ENCODE measurements at regions of chr9 and their contacts with region 1.

Region 1: DNA sequence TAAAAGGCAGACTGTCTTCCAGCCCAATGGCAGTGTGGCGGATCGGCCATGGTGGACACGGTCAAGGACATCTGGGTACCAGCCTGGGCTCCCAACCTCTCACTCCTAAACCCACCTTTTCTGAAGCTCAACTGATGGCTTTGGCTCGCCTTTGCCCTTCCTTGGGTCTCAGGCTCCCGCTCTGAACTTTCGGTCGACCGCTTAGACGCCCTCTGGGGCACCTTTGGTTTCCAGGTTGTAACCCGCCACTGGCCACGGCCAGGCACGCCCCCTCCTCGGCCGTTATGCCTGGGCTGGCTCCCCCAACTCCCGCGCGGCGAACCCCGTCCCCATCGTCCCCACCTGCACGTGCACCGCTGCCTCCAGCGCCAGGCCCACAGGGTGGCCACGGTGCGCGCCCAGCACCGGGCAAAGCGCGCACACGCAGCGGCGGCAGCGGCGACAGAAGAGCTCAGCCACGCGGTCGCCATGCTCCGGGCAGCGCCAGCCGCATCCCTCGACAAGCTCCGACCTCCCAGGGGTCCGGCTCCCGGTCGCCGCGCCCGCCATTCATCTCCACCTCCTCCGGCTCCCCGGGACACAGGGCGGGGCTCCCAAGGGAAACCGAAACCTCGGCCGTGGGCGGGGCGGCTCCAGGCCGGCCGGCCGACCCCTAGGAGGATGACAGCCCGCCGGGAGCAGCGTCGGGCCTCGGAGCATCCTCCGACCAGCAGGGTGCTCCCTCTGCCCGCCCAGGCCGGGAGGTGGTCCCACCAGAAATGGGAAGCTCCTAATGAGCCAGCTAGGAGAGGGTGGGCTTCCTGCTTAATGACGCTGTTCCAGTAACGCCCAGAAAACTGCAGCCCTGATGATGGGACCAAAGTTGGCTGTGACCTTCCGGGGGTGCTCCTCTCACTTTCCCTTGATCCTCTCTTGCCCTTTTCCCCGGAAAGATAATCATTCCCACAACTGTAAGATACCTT is at the start of gene TRIM14:
- DNase-seq: peak; percentile 71
- H3K4me3 Mint-ChIP-seq: peak within 1 kb of the TSS; percentile 85
- H3K27ac Mint-ChIP-seq: peak within 1 kb of the TSS; percentile 97
- H3K4me1 Mint-ChIP-seq: peaks cover 53% of the 10 kb centered on the region
- H3K27me3 Mint-ChIP-seq: no peaks in the 10 kb centered on the region
- total RNA-seq, gene TRIM14: 116 to 124 TPM

Region 2: DNA sequence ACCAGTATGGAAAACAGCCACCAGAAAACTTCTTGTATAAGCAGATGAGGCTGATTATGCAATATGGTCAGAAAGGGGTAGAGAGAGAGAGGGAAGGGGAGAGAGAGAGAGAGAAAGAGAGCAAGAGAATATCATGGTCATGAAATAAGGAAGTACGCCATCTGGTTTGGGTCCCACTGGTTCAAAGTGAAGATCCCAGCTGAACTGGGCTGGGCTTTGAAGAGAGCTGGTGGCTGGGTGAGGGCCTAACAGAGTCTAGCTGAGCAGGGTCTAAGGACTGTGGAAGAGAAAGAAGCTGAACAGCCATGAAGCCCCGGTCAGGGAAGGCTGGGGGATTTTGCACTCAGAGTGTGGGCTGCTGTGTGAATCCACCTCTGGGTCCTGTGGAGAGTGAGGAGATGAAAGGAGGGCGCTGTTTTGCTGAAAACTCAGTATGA is 14.5 kb before region 1 on chr9:
- CTCF ChIA-PET with region 1: interaction called, 11 read pairs
- POLR2A ChIA-PET with region 1: interaction called, 3 read pairs
- DNase-seq: no peak
- H3K4me3 Mint-ChIP-seq: peak overlapping the region; percentile 28
- H3K27ac Mint-ChIP-seq: peak overlapping the region; percentile 96
- H3K4me1 Mint-ChIP-seq: peaks cover 89% of the 10 kb centered on the region
- H3K27me3 Mint-ChIP-seq: no peaks in the 10 kb centered on the region

Region 3: DNA sequence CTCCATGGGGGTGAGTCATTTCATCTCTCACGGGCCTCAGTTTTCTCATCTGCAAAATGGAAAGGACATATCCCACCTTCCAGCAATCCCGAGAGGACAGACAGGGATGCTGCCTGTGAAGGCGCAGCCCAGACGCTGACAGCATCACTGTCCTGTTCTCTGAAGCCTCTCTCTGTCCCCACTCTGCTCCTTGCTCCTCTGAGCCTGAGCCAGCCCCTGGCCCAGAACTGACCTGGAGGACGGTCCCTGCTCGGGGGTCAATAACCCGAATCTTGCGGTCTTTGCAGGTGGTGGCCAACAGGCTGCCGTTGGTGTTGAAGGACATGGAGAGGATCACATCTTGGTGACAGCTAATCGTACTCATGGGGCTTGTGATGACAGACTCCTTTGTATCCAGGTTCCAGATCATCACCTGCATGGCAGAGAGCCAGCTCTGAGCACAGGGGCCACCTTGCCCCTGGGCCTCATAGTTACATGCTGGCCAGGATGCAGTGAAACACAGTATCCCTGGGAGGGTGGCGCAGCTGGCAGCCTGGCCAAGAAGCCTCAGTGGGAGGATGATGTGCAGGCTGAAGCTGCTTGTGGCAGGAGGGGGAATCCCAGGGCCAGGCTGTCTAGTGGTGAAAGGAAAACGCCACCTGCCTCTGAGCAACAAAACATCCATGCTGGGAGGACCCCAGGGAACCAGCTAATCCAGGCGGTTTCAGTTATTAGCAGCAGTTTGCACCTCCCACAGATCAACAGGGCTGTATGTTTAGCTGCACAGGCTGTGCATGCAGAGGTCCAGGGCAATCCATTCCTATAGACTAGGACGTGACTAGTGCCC is 14.1 kb after region 1 on chr9:
- CTCF ChIA-PET with region 1: interaction called, 11 read pairs
- POLR2A ChIA-PET with region 1: no interaction called
- DNase-seq: no peak
- H3K4me3 Mint-ChIP-seq: no peak overlapping the region
- H3K27ac Mint-ChIP-seq: no peak overlapping the region
- H3K4me1 Mint-ChIP-seq: peaks cover 10% of the 10 kb centered on the region
- H3K27me3 Mint-ChIP-seq: no peaks in the 10 kb centered on the region

Region 4: DNA sequence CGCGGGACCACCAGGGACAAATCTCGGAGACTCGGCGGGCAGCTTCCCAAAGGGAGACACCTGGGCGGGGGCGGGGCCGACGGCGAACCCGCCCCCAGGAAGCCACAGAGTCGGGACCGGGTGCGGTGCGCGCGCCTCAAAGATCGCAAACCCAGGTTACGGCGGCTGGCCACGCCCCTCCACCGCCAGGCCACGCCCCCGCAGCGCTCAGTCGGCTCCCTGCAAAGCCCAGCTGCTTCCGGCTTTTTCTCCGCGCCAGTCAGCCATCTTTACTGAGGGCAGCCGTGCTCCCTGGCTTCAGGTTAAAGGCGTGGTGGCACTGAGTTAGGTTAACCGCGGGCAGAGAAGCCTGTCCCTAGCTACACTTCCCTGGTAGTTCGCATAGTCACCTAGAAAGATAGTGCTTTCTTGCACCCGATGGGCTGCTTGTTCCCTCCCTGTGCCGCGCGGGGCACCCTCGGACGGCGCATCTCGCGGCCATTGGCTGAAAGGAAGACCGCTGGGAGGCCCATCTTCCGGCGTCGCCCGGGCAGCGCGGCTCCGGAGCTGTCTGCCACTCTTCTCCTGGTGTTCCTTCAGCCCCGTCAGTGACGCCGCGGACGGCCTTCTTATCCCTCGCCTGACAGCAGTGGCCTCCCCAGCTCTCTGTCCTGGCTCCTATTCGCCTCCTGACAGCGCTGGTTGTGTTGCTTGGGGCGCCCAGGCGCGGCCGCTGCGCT is 136.8 kb after region 1 on chr9 and contains the start of gene TBC1D2:
- CTCF ChIA-PET with region 1: interaction called, 18 read pairs
- POLR2A ChIA-PET with region 1: no interaction called
- DNase-seq: peak; percentile 97
- H3K4me3 Mint-ChIP-seq: peak within 1 kb of the TSS; percentile 90
- H3K27ac Mint-ChIP-seq: peak within 1 kb of the TSS; percentile 98
- H3K4me1 Mint-ChIP-seq: peaks cover 33% of the 10 kb centered on the region
- H3K27me3 Mint-ChIP-seq: no peaks in the 10 kb centered on the region
- total RNA-seq, gene TBC1D2: 8.3 to 8.7 TPM